ENCODE measurements at regions of chr13 and their contacts with region 1.

Region 1: DNA sequence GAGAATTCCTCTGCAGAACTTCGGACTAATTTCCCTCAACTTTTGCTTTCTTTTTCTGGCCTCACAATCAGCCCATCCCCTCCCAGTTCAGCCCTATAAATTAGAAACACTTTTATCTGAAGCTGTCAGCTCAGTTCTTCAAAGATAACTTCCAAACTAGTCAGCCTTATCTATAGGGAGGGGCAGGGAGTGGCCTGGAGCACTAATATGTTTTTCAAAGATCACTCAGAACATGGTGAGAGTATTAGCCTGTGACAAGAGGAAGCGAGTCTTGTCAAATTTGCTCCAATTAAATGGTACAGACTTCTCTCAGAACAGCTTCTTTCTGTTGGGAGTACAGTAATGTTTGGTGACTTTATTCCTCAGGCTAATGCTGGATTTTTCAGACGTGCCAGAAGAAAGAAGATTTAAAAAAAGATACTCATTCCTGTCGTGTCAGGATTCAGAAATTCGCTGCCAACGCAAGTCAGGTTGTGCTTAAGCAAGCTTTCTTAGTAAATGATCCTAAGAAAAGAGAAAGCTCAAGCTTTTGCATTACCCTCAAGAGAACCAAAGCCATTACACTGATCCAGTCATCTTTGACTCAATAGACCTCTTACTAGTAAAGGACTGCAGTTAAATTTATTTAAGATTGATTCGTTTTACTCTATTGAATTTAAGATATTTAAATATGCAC is 1033.6 kb downstream of the SLITRK5 start:
- DNase-seq: no peak
- H3K4me3 ChIP-seq: peak overlapping the region; percentile 12 to 61 (median 41)
- H3K27ac ChIP-seq: peak overlapping the region in 1 of 2 donors; percentile 10
- H3K4me1 ChIP-seq: no peaks in the 10 kb centered on the region
- H3K27me3 ChIP-seq: no peaks in the 10 kb centered on the region
- CTCF ChIP-seq: no peak
- POLR2A ChIP-seq: no peak

Region 2: GRCh38 chr13:88068975-88069374 is 635.8 kb before region 1 on chr13:
- intact Hi-C with region 1: no loop called
- DNase-seq: no peak
- H3K4me3 ChIP-seq: no peak overlapping the region
- H3K27ac ChIP-seq: no peak overlapping the region
- H3K4me1 ChIP-seq: no peaks in the 10 kb centered on the region
- H3K27me3 ChIP-seq: no peaks in the 10 kb centered on the region
- CTCF ChIP-seq: no peak
- POLR2A ChIP-seq: no peak

Region 3: DNA sequence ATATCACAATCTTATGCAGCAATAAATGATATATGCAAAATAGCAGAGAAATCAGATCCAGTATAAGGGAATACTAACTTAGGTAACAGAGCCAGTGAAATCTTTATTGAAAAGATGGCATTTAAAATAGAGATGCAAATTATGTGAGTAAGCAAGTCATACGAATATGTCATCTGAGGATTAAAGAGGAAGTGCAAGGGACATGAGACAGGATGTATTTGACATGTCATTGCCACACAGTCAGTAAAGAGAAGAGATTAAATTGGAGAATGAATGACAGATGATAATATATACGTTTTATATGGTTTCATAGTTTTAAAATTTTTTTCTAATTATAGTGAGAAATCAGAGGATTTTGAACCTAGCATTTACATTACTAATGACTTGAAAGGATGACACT is 607.2 kb before region 1 on chr13:
- intact Hi-C with region 1: no loop called
- DNase-seq: no peak
- H3K4me3 ChIP-seq: no peak overlapping the region
- H3K27ac ChIP-seq: no peak overlapping the region
- H3K4me1 ChIP-seq: no peaks in the 10 kb centered on the region
- H3K27me3 ChIP-seq: no peaks in the 10 kb centered on the region
- CTCF ChIP-seq: no peak
- POLR2A ChIP-seq: no peak

Region 4: DNA sequence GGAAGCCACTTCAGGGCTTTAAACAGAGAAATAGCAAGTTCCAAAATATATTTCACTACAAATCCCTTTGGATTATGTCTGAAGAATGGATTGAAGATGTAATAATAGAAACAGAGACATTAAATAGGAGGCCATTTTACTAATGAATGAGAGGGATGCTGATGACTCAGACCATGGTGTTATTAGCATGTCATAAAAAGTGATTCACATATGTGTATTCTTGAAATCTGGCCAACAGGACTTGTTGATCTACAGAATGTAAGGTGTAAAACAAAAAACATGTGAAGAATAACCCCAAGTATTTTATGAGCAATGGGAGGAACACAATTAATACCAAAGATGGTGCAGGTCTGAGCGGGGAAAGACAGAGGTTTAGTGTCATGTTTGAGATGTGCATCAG is 159.9 kb before region 1 on chr13:
- intact Hi-C with region 1: loop called (anchors 5 kb)
- DNase-seq: no peak
- H3K4me3 ChIP-seq: no peak overlapping the region
- H3K27ac ChIP-seq: no peak overlapping the region
- H3K4me1 ChIP-seq: no peaks in the 10 kb centered on the region
- H3K27me3 ChIP-seq: no peaks in the 10 kb centered on the region
- CTCF ChIP-seq: no peak
- POLR2A ChIP-seq: no peak